GM12878 (cell line): ENCODE measurements at regions of chr1 and their contacts with region 1.

Region 1: DNA sequence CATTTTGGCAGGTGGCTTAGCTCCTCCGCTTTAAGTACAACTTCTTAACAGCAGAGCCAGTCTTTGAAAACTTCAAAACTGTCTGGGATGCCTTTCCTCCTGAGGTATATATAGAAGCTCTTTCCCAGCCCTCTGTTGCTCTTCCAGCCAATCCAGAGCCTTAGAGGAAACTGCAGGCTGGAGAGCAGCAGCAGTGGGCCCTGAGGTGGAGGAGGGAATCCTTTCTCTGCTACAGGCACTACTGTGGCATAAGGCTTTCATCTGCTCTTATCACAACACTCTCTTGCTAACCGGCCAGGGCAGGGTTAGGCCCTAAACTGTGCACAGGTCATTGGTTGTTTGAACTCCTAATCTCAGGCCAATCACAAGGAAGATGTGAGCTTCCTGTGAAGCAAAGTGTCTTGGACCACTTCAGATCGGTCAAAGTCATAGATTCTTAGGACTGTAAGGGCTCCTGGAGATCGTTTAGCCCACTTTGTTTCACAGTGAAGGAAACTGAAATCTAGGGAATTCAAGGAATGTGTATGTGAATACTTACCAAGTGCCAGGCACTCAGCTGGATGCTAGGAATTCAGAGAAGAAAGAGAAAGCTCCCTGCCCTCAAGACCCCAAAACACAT is at the start of gene RGS5:
- DNase-seq: no peak
- ATAC-seq: no peak
- H3K4me3 ChIP-seq: no peak within 1 kb of the TSS
- H3K27ac ChIP-seq: no peak within 1 kb of the TSS
- H3K4me1 ChIP-seq: no peaks in the 10 kb centered on the region
- H3K27me3 ChIP-seq: no peaks in the 10 kb centered on the region
- CTCF ChIP-seq: no peak
- EP300 ChIP-seq: no peak
- POLR2A ChIP-seq: no peak
- RAD21 ChIP-seq: no peak
- polyA plus RNA-seq, gene RGS5: 0.63 to 2.0 TPM

Region 2: DNA sequence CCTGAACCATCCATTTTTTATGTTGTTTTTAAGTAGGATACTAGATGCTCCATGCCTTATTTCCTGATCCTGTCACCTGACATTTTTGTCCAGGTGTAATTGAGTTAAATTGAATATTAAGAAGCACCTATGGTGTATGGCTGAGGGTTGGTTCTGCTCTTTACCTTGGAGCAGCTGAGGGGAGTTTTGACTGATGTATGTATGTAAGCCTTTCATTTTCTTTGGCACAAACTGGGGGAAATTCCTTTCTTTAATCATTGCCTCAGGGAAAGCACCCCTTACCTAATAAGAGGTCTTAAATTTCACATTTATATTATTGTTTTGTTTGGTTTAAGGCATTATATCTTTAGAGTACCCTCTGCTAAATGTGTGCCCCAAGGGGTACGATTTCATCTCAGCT is 60.9 kb after region 1 on chr1:
- CTCF ChIA-PET with region 1: no interaction called
- POLR2A ChIA-PET with region 1: no interaction called
- RAD21 ChIA-PET with region 1: no interaction called
- SMC1A ChIA-PET with region 1: no interaction called
- in situ Hi-C with region 1: no loop called
- intact Hi-C with region 1: loop called (anchors 10 kb)
- DNase-seq: no peak
- ATAC-seq: peak; percentile 90
- H3K4me3 ChIP-seq: no peak overlapping the region
- H3K27ac ChIP-seq: no peak overlapping the region
- H3K4me1 ChIP-seq: no peaks in the 10 kb centered on the region
- H3K27me3 ChIP-seq: no peaks in the 10 kb centered on the region
- CTCF ChIP-seq: no peak
- EP300 ChIP-seq: no peak
- POLR2A ChIP-seq: no peak
- RAD21 ChIP-seq: no peak